ENCODE measurements at regions of chr1 and their contacts with region 1.

Region 1: GRCh38 chr1:178749581-178750166 is 24.6 kb downstream of the RALGPS2 start:
- DNase-seq: no peak
- H3K4me3 ChIP-seq: no peak overlapping the region
- H3K27ac ChIP-seq: no peak overlapping the region
- H3K4me1 ChIP-seq: no peaks in the 10 kb centered on the region
- H3K27me3 ChIP-seq: no peaks in the 10 kb centered on the region
- CTCF ChIP-seq: no peak
- POLR2A ChIP-seq: no peak

Region 2: GRCh38 chr1:178542560-178543356 is 206.9 kb before region 1 on chr1:
- intact Hi-C with region 1: loop called (anchors 5 kb)
- DNase-seq: peak; percentile 93
- H3K4me3 ChIP-seq: peak overlapping the region; percentile 63 to 88
- H3K27ac ChIP-seq: peak overlapping the region; percentile 52 to 74
- H3K4me1 ChIP-seq: no peaks in the 10 kb centered on the region
- H3K27me3 ChIP-seq: no peaks in the 10 kb centered on the region
- CTCF ChIP-seq: peak; percentile 97 to 99 (median 97)
- POLR2A ChIP-seq: no peak

Measured in testis (tissue), 5 donors.